Activated CD4-positive, alpha-beta memory T cell treated with anti-CD3 and anti-CD28 coated beads for 36 hours (primary cell): ENCODE measurements at regions of chr16 and their contacts with region 1.

Region 1: DNA sequence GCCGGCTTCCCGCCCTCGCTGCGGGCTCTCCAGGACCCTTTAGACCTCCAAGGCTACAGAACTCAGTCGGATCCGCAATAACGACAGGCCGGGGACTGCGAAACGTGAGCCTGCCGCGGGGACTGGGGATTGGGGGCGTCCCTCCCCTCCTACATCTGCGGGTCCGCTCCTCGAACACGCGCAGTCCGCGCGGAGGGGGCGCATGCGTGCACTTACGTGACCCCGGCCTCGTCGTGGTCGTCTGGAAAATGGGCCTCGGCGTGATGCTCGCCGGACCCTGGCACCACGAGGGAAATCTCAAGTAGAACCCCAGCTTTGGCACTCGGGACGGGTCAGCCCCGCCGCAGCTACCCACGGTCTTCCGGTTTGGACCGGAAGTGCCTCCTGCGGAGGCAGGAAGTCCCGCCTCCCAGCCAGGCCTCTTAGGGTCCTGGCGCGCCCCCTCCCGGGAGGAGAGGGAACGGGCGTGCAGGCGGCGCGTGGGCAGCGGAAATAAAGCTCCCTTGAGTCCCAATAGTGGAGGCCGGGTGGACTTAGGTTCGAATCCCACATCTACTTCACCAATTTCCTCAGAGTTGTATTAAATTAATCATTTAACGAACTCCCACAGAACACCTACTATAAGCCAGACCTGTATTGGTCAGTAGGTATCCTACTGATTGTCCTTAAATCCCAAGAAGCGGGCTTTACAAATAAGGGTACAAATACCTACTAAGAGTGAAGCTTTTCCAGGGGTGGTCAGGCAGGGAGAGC is at the start of gene TAF1C:
- DNase-seq: peak; percentile 94
- H3K4me3 Mint-ChIP-seq: peak within 1 kb of the TSS; percentile 96
- H3K27ac Mint-ChIP-seq: peak within 1 kb of the TSS; percentile 86
- H3K4me1 Mint-ChIP-seq: peaks cover 22% of the 10 kb centered on the region
- H3K27me3 Mint-ChIP-seq: no peaks in the 10 kb centered on the region
- total RNA-seq, gene TAF1C: 44.7 to 48.1 TPM

Region 2: DNA sequence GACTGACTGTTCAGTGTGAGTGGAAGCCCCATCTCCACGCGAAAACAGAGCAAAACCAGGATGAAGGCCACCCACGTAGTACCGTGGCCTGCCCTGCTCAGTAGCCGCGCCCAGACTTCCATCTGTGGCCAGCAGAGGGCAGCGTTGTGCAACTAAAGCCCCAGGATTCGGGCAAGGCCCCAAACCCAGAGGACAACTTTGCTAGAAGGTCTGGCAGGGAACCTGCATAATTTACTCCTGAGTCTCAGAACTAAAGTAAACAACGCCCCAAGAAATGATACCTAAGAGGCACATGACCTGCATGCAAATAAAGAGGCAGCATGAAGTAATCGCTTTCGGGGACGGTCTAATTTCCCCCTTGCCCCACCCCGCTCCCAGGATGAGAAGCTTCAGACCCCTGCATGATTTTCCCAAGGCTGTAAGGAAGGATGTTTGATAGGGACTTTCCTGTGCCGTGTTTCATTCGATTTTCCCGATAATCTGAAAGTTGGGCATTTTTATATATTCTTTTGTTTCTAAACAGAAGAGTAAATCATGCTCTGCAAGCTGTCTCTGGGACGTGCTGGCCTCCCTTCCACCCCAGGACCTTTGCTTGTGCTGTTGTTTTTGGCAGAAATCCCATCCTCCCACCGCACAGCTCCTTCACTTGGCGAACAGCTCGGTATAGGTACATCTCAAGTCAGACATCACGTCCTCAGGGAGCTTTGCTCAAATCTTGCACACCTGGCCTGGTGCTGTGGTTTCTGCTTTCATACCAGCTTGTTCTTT is 360.5 kb before region 1 on chr16:
- CTCF ChIA-PET with region 1: no interaction called
- POLR2A ChIA-PET with region 1: no interaction called
- intact Hi-C with region 1: loop called (anchors 5 kb)
- DNase-seq: peak; percentile 87
- H3K4me3 Mint-ChIP-seq: no peak overlapping the region
- H3K27ac Mint-ChIP-seq: no peak overlapping the region
- H3K4me1 Mint-ChIP-seq: peaks cover 2% of the 10 kb centered on the region
- H3K27me3 Mint-ChIP-seq: peaks cover 6% of the 10 kb centered on the region

Region 3: DNA sequence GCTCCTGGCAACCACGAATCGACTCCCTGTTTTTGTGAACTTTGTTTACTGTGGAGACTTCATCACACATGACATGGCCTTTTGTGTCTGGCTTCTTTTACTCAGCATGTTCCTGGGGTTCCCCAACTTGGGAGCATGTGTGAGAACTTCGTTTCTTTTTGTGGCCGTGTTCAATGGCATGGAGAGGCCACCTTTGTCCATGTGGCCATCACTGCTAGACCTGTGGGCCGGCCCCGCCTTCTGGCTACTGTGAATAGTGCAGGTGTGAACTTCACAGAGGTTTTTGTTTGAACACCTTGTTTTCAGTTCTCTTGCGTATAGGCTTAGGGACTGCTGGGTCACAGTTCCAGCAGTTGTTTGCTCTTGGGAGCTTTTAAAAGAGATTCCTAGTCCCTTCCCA is 138.6 kb before region 1 on chr16:
- CTCF ChIA-PET with region 1: no interaction called
- POLR2A ChIA-PET with region 1: no interaction called
- intact Hi-C with region 1: no loop called
- DNase-seq: no peak
- H3K4me3 Mint-ChIP-seq: no peak overlapping the region
- H3K27ac Mint-ChIP-seq: no peak overlapping the region
- H3K4me1 Mint-ChIP-seq: peaks cover 11% of the 10 kb centered on the region
- H3K27me3 Mint-ChIP-seq: peaks cover 11% of the 10 kb centered on the region

Region 4: DNA sequence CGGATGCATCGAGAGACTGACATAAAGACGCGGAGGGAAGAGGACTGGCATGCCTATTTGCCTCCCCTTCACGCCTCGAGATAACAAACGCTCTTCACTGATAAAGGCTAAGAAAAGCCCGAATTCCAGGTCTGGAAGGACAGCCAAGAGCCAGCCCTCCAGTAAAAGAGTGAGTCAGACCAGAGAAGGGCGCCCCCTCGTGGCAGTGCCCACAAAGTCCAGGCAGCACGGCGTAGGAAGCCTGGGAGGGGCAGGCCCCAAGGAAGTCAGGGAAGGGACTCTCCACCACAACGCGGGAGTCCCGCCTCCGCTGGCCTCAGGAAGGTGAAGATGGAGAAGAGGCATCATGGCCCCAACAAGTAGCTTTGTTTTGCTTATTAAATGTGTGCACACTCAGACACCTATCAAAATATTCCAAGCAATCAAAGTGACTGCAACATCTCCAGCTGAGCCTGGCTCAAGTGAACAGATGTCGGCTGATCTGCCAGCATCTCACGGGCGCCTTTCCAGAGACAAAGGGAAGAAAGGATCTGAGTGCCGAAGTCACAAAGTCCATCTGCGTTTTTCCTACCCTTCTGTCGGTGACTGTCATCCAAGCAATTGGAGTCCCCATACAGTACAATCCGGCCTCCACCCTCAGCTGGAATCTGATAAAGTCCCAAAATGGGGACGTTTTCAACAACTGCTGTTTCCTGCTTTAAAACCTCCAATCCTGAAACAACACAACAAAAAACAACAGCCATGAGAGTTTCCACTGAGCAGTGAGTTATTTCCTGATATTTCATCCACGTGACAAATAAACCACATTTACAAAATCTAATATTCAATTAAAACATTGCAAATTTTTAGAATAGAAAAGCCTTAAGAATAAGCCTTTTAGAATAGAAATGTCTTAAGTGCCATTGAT is 123.9 kb before region 1 on chr16:
- CTCF ChIA-PET with region 1: interaction called, 28 read pairs
- POLR2A ChIA-PET with region 1: no interaction called
- intact Hi-C with region 1: no loop called
- DNase-seq: peak; percentile 82
- H3K4me3 Mint-ChIP-seq: no peak overlapping the region
- H3K27ac Mint-ChIP-seq: no peak overlapping the region
- H3K4me1 Mint-ChIP-seq: peaks cover 7% of the 10 kb centered on the region
- H3K27me3 Mint-ChIP-seq: no peaks in the 10 kb centered on the region

Region 5: GRCh38 chr16:84096115-84097012 is 90.5 kb before region 1 on chr16:
- CTCF ChIA-PET with region 1: interaction called, 16 read pairs
- POLR2A ChIA-PET with region 1: no interaction called
- intact Hi-C with region 1: no loop called
- DNase-seq: no peak
- H3K4me3 Mint-ChIP-seq: no peak overlapping the region
- H3K27ac Mint-ChIP-seq: no peak overlapping the region
- H3K4me1 Mint-ChIP-seq: peaks cover 10% of the 10 kb centered on the region
- H3K27me3 Mint-ChIP-seq: no peaks in the 10 kb centered on the region

Region 6: GRCh38 chr16:84166796-84167695 is 19.8 kb before region 1 on chr16:
- CTCF ChIA-PET with region 1: interaction called, 16 read pairs
- POLR2A ChIA-PET with region 1: no interaction called
- intact Hi-C with region 1: no loop called
- DNase-seq: peak; percentile 78
- H3K4me3 Mint-ChIP-seq: no peak overlapping the region
- H3K27ac Mint-ChIP-seq: no peak overlapping the region
- H3K4me1 Mint-ChIP-seq: peaks cover 4% of the 10 kb centered on the region
- H3K27me3 Mint-ChIP-seq: peaks cover 29% of the 10 kb centered on the region

Region 7: DNA sequence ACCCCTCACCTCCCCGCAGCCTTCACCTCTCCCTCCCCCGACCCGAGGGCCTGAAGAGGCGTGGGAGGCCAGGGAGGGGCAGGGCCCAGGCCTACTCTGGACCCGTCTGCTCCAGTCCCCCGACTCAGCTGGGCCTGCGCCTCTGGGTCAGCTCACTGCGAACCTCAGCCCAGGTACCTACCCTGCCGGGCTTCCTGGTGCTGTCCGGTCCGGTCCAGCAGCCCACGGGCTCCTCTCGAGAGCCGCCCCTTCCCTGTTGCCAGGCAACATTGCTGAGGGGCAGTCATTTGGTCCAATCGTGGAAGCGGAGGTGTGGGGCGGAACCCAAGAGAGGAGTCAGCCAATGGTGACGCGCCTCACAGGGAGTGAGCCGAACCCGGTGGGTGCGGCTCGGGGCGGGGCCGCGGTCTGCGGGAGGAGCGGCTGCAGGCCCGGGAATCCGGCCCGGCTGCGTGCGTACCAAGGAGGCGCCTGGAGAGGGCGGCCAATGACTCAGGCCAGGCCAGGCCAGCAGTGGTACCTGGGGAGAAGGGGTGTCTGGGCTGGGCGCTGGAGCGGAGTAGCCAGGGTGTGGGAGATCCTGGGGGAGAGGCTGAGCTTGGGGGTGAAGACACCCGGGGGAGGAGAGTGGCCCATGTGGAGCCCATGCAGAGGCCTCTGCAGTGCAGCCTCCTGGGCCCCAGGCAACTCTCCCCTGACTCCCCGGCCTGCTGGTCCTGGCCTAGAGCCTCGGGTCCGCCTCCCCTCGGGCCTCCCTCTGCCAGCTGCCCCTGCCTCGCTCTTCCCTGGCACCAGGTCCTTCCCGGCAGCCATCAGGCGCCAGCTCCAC is 317.8 kb after region 1 on chr16 and contains the start of gene MEAK7:
- CTCF ChIA-PET with region 1: interaction called, 6 read pairs
- POLR2A ChIA-PET with region 1: no interaction called
- intact Hi-C with region 1: loop called (anchors 10 kb)
- DNase-seq: peak; percentile 99
- H3K4me3 Mint-ChIP-seq: peak within 1 kb of the TSS; percentile 86
- H3K27ac Mint-ChIP-seq: peak within 1 kb of the TSS; percentile 87
- H3K4me1 Mint-ChIP-seq: peaks cover 51% of the 10 kb centered on the region
- H3K27me3 Mint-ChIP-seq: no peaks in the 10 kb centered on the region
- total RNA-seq, gene MEAK7: 12.9 to 13.6 TPM